ENCODE measurements at regions of chr11 and their contacts with region 1.

Region 1: DNA sequence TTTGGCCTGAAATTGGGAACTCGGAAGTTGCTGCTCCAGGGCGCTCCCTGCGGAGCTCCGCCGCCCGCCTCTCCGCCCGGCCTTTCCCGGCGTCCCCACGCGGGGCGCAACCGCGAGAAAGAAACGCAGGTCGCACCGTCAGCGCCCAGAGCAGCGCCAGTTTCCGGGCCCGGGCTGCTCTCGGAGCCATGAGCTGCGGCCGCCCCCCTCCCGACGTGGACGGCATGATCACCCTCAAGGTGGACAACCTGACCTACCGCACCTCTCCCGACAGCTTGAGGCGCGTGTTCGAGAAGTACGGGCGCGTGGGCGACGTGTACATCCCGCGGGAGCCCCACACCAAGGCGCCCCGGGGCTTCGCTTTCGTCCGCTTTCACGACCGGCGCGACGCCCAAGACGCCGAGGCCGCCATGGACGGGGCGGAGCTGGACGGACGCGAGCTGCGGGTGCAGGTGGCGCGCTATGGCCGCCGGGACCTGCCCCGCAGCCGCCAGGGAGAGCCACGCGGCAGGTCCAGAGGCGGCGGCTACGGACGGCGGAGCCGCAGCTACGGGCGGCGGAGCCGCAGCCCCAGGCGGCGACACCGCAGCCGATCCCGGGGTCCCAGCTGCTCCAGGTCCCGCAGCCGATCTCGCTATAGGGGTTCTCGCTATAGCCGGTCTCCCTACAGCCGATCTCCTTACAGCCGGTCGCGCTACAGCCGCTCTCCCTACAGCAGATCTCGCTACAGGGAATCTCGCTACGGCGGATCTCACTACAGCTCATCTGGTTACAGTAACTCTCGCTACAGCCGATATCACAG is 521 bp downstream of the SRSF8 start:
- DNase-seq: peak; percentile 72
- H3K4me3 Mint-ChIP-seq: peak overlapping the region; percentile 95
- H3K27ac Mint-ChIP-seq: peak overlapping the region; percentile 96
- H3K4me1 Mint-ChIP-seq: peaks cover 28% of the 10 kb centered on the region
- H3K27me3 Mint-ChIP-seq: peaks cover 23% of the 10 kb centered on the region

Region 2: DNA sequence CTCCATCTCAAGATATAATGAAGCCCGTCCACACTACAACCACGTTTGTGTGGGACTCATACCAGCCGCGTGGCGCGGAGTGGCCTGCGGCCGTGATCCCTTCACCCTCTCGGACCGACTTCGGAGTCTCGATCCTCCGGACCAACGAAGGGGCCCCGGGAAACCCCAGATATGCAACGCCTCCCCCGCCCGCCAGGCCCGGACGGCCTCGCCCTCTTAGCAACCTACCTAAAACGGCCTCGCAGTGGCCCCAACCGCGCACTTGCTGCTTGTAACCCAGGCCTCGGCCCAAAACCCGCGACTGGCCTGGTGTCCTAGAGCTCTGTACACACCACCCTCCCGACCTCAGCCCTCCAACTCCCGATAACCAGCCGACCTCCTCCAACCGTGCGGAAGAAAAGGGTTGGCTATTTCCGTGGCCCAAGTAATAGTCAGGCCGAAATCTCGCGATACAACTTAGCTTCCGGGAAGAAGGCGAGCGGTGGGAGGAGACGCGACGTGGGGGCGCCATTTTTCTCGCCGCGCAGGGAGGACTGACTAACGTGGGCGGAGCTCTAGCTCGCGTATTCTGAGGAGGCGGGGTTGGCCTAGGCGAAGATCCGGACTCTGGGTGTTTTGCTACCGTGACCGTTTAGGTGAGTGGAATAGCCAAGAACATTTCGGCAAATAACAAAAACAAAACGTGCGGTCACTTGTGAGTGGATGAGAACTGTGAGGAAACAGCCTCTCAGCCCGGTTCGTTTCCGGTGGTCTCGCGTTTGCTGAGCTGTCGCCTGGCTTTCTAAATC is 1326.0 kb before region 1 on chr11 and contains the starts of genes C11orf54 and TAF1D:
- intact Hi-C with region 1: loop called (anchors 2 kb)
- DNase-seq: peak; percentile 96
- H3K4me3 Mint-ChIP-seq: peak within 1 kb of the TSS; percentile 100
- H3K27ac Mint-ChIP-seq: peak within 1 kb of the TSS; percentile 99
- H3K4me1 Mint-ChIP-seq: peaks cover 53% of the 10 kb centered on the region
- H3K27me3 Mint-ChIP-seq: no peaks in the 10 kb centered on the region
- total RNA-seq, gene C11orf54: 19.3 and 21.6 TPM in 2 replicates
- total RNA-seq, gene TAF1D: 337 and 345 TPM in 2 replicates

Region 3: DNA sequence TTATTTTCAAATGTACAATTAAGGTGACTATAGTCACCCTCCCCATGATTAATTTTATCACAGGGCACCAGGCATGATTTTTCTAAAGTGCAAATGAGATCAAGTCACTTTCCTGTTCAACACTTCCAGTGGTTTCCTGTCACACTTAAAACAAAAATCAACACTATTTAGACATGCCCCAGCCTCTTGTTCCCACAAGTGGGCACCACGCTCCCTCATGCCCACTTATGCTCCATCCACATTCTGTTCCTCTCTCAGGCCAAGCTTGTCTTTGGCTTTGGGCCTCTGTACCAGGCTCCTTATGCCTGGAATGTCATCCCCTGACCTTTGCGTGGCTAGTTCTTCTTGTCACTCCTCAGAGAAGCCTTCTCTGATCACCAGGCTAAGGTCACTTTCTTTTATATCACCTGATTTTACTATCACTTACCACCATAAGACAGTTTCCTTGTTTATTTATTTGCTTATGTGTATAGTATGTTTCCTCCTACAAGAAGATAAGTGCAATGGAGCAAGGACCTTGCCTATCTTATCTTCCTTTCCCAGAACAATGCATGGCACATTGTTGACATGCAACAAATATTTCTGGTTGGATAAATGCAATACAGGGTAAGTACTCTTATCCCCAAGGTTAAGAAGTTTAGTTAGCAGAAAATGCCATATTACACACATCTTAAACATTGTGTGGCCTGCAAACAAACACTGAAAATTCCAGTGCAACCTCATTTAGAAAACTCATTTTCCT is 989.5 kb before region 1 on chr11:
- intact Hi-C with region 1: no loop called
- DNase-seq: no peak
- H3K4me3 Mint-ChIP-seq: no peak overlapping the region
- H3K27ac Mint-ChIP-seq: no peak overlapping the region
- H3K4me1 Mint-ChIP-seq: no peaks in the 10 kb centered on the region
- H3K27me3 Mint-ChIP-seq: no peaks in the 10 kb centered on the region

Region 4: DNA sequence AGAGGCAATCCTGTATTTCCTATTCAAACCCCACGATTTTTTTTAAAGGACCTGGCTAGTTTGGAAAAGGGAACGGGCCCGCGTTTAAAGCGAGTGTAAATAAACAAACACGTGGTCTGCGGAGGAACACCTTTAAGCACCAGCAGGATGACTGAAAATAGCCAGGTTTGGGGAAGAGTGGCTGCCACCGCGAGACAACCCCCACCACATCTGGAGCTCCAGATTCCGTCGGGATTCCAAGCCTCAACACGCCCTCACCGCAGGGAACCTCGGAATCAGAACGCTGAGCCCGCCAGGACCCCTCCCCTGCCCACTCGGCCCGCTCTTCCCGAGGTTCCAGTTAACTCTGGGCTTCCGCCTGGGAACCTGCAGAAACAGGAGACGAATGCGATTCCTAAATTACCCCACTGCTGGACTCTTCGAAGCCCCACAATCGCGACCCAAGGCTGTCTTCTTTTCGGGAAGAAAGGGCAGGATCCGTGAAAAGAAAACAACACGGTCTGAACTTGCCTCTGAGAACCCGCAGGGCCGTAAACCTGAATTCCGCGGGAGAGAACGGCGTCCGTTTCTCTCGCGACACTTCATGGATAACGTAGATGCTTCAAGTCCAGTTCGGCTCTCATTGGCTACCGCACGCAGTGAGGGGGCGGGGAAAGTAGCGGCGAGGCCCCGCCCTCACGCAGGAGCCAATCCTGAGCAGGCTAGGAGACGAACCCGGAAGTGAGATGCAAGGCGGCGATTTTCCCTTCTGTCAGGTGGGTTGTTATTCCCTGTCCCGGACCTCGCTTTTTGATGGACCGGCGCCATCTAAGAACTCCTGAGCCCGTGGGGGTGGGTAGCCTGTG is 573.7 kb before region 1 on chr11 and contains the starts of genes ANKRD49 and MRE11:
- intact Hi-C with region 1: loop called (anchors 5 kb)
- DNase-seq: peak; percentile 96
- H3K4me3 Mint-ChIP-seq: peak within 1 kb of the TSS; percentile 94
- H3K27ac Mint-ChIP-seq: peak within 1 kb of the TSS; percentile 92
- H3K4me1 Mint-ChIP-seq: peaks cover 36% of the 10 kb centered on the region
- H3K27me3 Mint-ChIP-seq: no peaks in the 10 kb centered on the region
- total RNA-seq, gene ANKRD49: 20.0 and 21.2 TPM in 2 replicates
- total RNA-seq, gene MRE11: 43.8 and 45.9 TPM in 2 replicates

Region 5: GRCh38 chr11:94623120-94623735 is 444.0 kb before region 1 on chr11:
- intact Hi-C with region 1: loop called (anchors 5 kb)
- DNase-seq: peak; percentile 27
- H3K4me3 Mint-ChIP-seq: no peak overlapping the region
- H3K27ac Mint-ChIP-seq: no peak overlapping the region
- H3K4me1 Mint-ChIP-seq: no peaks in the 10 kb centered on the region
- H3K27me3 Mint-ChIP-seq: peaks cover 7% of the 10 kb centered on the region

Region 6: DNA sequence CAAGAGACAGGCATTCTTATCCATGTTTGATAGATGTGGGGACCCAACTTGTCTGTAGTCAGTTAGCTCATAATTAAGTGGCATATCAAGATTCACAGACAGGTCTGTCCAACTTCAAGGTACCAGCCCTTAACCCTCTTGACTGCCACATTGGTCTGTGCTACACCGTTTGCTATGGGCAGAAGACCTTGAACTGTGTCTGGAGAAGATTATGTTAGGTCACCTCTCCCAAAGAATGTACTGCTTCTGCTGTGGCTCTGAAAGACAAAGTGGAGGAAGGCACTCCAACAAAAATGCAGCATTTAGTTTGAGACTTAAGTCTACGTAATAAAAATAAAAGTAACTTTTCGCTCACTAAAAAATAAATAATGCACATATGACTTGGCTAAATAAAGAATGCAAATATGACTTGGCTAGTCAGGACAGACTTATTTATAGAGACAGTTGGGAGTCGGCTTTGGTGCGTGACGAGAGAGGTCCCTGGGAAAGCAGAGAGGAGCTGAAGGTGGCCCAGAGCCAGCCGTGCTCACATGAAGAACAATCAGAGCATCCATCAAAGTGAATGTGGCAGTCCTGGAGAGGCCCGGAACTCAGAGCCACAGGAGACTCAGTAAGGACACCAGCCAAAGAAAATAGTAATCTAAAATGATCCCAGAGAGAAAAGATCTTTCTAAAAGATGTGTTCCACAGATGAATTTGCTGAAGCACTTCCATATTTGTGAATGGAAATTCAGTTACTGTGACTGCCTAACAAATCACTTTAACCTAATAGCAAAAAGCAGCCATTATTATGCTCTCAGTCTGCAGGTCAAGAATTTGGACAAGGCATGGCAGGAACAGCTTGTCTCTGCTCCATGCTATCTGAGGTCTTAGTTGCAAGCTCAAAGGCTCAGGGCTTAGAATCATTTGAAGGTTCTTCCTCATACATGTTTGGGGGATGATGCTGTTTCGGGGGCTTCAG is 128.9 kb before region 1 on chr11:
- intact Hi-C with region 1: no loop called
- DNase-seq: no peak
- H3K4me3 Mint-ChIP-seq: no peak overlapping the region
- H3K27ac Mint-ChIP-seq: no peak overlapping the region
- H3K4me1 Mint-ChIP-seq: peaks cover 12% of the 10 kb centered on the region
- H3K27me3 Mint-ChIP-seq: peaks cover 11% of the 10 kb centered on the region

Region 7: GRCh38 chr11:95089620-95090542 is 22.6 kb after region 1 on chr11 and contains the start of gene ENDOD1:
- intact Hi-C with region 1: loop called (anchors 1 kb)
- DNase-seq: peak; percentile 85
- H3K4me3 Mint-ChIP-seq: peak within 1 kb of the TSS; percentile 89
- H3K27ac Mint-ChIP-seq: peak within 1 kb of the TSS; percentile 96
- H3K4me1 Mint-ChIP-seq: peaks cover 83% of the 10 kb centered on the region
- H3K27me3 Mint-ChIP-seq: no peaks in the 10 kb centered on the region
- total RNA-seq, gene ENDOD1: 33.8 and 34.3 TPM in 2 replicates

Region 8: GRCh38 chr11:95150946-95151684 is 83.9 kb after region 1 on chr11:
- intact Hi-C with region 1: loop called (anchors 1 kb)
- DNase-seq: peak; percentile 87
- H3K4me3 Mint-ChIP-seq: peak overlapping the region; percentile 87
- H3K27ac Mint-ChIP-seq: peak overlapping the region; percentile 78
- H3K4me1 Mint-ChIP-seq: peaks cover 46% of the 10 kb centered on the region
- H3K27me3 Mint-ChIP-seq: peaks cover 6% of the 10 kb centered on the region

Region 9: DNA sequence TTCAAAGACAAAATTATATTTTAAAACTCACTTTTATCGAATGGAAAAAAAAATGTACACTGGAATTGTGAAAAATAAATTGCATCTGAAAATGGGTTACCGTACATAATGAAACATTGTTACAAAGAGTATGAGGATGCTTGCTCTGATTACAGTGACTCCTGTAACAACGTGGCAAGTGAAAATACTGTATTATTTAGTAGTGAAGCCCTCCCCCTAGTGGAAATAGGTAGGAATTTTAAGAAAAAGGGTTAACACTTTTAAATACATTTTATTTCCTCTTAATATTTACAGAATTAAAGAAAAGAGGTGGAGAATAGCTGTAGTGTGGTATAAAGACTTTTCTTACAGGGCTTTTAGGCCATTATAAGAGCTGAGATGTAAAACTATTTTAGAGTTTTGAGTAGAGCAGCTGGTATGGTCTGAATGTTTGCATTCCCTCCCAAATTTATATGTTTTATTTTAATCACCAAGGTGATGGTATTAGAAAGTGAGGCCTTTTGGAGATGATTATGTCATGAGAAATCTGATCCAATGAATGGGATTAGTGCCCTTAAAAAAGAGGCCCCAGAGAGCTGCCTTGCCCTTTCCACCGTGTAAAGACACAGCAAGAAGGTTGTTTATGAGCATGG is 697.1 kb after region 1 on chr11:
- intact Hi-C with region 1: loop called (anchors 1 kb)
- DNase-seq: no peak
- H3K4me3 Mint-ChIP-seq: no peak overlapping the region
- H3K27ac Mint-ChIP-seq: no peak overlapping the region
- H3K4me1 Mint-ChIP-seq: no peaks in the 10 kb centered on the region
- H3K27me3 Mint-ChIP-seq: no peaks in the 10 kb centered on the region